IMR-90 (cell line): ENCODE measurements at regions of chr5 and their contacts with region 1.

Region 1: DNA sequence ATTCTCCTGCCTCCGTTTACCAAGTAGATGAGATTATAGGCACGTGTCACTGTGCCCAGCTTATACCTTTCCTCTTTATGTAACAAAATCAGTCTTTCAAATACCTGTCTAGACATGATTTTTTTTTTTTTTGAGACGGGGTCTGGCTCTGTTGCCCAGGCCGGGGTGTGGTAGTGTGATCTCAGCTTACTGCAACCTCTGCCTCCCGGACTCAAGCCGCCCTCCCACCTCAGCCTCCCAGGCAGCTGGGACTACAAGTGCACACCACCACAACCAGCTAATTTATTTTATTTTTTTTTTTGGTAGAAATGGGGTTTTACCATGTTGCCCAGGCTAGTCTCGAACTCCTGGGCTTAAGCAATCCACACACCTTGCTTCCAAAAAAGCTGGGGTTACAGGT is 13.2 kb downstream of the NADK2 start:
- DNase-seq: no peak
- ATAC-seq: no peak
- H3K4me3 ChIP-seq: no peak overlapping the region
- H3K27ac ChIP-seq: peak overlapping the region; percentile 75
- H3K4me1 ChIP-seq: peaks cover 5% of the 10 kb centered on the region
- H3K27me3 ChIP-seq: no peaks in the 10 kb centered on the region
- CTCF ChIP-seq: no peak
- POLR2A ChIP-seq: no peak
- RAD21 ChIP-seq: no peak

Region 2: DNA sequence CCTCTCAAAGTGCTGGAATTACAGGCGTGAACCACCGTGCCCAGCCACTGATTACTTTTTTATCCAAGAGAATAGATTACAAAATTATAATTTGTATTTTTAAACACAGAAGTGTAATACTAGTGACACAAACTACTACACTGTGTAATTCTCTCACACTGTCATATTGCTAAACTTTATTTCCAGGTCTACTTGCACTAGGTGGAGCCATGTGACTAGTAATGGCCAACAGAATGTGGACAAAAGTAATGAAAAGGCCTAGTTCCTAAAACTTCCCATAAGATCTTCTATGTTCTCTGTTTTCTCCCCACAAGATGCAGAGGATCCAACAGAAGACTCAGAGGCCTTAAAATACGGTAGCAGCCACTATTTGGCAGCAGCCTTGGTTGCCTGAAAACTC is 14.1 kb before region 1 on chr5:
- CTCF ChIA-PET with region 1: interaction called, 3 read pairs
- POLR2A ChIA-PET with region 1: interaction called, 4 read pairs
- dilution Hi-C with region 1: no loop called
- in situ Hi-C with region 1: no loop called
- intact Hi-C with region 1: loop called (anchors 2 kb)
- DNase-seq: no peak
- ATAC-seq: no peak
- H3K4me3 ChIP-seq: no peak overlapping the region
- H3K27ac ChIP-seq: no peak overlapping the region
- H3K4me1 ChIP-seq: no peaks in the 10 kb centered on the region
- H3K27me3 ChIP-seq: no peaks in the 10 kb centered on the region
- CTCF ChIP-seq: peak; percentile 30
- POLR2A ChIP-seq: no peak
- RAD21 ChIP-seq: peak; percentile 28; the same call in 1 of the 2 replicates